Posterior vena cava (tissue), 2 donors: ENCODE measurements at regions of chr5 and their contacts with region 1.

Region 1: GRCh38 chr5:138226910-138227309 is 13.8 kb upstream of the CDC23 start:
- DNase-seq: no peak

Region 2: GRCh38 chr5:138274189-138274853 is 47.4 kb after region 1 on chr5 and contains the start of gene GFRA3:
- intact Hi-C with region 1: loop called in 1 of 2 experiments (anchors 10 kb)
- DNase-seq: peak; percentile 61
- total RNA-seq, gene GFRA3: 0.43 TPM in 1 of 2 donors, not detected in the other

Region 3: DNA sequence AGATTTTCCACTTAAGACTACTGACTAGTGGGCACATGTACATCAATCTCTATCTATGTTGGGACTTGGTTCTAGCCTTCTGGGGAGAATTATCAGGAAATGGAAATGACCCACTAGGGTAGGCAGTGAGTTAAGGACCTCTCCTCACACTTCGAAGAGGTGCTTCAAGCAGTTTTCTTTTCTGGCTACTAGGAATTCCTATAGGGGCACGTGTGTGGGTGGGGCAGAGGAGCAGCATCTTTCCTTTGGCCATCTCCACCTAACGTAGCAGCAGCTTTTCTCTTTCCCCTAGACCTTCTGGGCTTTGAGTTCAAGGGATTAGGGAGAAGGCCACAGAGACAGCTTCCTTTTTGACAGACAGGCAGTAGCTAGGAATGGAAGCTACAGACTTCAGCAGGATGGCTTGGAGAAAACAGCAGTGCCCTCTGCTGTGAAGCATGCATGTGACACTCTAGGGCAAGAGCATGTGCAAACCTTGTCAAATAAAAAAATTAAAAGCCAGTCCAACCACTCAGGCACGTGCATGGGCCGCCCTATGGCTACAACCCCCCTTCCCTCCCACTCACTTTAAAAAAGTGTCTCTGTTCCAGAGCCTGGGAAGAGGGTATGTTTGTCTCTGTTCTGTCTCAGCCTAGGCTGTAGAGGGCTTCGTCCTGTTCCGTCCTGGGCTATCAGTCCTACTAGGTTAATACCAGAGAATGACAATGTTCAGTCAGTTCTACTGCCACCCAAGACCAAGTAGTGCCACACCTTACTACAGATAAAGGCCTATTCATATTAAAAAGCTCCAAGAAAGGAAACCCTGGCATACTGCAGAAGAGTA is 56.2 kb after region 1 on chr5:
- intact Hi-C with region 1: loop called (anchors 5 to 10 kb)
- DNase-seq: no peak